ENCODE measurements at regions of chr16 and their contacts with region 1.

Region 1: DNA sequence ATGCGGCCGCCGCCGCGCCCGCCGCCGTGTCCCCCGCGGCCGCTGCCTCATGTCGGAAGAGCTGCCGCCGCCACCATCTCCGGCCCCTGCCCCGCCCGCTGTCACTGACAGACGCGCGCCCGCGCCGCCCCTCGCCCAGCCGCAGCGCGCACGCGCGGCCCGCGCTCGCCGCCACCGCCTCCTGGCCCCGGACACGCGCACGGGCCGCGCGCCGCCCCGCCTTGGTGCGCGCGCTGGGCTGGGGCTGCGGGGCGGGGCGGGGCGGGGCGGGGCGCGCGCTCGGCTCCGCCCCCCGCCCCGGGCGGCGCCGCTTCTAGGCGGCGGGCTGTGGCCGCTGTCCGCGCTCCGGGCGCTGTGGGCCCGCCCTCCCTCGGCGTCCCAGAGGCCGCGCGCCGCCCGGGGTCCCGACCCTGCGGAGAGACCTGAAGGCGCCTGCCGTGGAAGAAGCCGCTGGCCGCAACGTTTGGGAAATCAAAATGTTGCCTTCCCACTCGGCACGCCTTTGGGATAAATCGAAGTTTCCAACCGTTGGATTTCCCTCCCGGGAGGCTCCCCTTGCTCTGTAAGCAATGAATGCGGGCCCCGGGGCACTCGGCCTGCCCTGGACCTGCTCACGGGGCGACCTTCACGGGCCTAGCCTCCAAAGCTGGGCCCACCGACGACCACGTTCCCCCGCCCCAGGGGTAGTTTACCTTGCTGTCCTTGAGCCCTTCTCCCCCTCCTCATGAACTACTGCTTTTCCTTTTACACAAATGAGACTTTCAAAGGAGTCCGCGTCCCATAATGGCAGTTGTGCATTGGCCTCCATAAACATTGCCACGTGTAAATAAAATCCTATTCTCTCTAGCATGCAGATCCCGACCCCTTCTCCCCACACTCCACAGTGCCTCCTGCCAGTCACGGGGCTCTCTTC is at the start of gene ADCY9:
- ATAC-seq: peak; percentile 56 to 86 (median 82)
- H3K4me3 ChIP-seq: peak within 1 kb of the TSS; percentile 52 to 64 (median 58)
- H3K27ac ChIP-seq: peak within 1 kb of the TSS; percentile 21 to 53
- H3K4me1 ChIP-seq: peaks cover 27 to 29% of the 10 kb centered on the region in 2 donors
- total RNA-seq, gene ADCY9: 4.9 to 17.4 (median 9.4) TPM

Region 2: DNA sequence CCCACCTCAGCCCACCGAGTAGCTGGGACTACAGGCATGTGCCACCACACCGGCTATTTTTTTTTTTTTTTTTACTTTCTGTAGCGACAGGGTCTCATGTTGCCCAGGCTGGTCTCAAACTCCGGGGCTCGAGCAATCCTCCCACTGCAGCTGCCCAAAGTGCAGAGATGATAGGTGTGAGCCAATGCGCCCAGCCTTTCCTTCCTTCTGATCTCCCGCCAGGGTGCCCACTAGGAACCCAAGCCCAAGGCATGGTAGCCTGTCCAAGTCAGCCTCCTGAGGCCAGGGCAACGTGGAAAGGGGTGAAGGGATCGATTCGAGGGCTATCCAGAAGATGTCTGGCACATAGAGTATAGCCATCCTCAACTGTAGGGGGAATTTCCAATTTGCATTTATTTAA is 226.5 kb before region 1 on chr16:
- in situ Hi-C with region 1: no loop called
- ATAC-seq: no peak
- H3K4me3 ChIP-seq: no peak overlapping the region
- H3K27ac ChIP-seq: no peak overlapping the region
- H3K4me1 ChIP-seq: no peaks in the 10 kb centered on the region

Region 3: DNA sequence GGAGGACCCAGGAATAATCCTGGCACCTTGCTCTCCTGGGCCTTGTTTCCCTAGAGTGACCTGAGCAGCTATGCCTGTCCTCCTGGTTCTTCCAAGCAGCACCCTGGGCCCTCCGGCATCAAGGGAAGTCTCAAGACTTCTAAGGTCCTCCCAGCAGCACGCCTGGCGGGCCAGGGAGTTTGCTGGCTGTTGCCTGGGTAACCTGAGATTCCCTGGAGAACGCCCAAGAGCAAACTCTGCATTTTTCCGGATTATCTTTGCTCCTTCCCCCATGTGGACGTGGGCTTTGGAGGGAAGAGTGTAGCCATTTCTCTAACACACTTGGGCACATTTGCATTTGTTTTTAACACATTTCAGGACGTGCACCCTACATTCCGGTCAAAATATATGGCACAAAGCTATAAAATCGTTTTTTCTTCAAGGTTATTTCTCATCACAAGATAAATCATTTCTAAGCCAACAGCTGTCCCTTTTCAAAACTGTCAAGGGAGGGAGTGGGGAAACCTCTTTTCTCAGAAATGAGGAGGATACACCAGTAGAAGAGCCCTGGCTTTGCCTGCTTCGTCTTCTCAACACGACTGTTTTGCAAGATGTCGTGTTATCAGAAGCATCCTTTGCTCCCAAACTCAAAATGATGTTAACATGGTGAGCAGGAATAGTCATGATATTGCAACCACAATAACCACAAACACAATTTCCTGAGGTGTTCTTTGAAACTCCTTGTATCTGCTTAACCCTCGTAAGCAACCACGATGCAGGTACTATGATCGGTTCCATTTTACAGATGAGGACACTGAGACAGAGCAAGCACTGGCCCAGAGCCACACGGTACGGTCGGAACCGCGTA is 116.9 kb before region 1 on chr16:
- in situ Hi-C with region 1: loop called in 1 of 9 experiments (anchors 25 kb)
- ATAC-seq: peak; percentile 86 to 98 (median 92)
- H3K4me3 ChIP-seq: no peak overlapping the region
- H3K27ac ChIP-seq: no peak overlapping the region
- H3K4me1 ChIP-seq: peaks cover 15% of the 10 kb centered on the region in 2 donors

Measured in motor neuron (in vitro differentiated cells).